Naive thymus-derived CD4-positive, alpha-beta T cell (primary cell): ENCODE measurements at regions of chr1 and their contacts with region 1.

Region 1: DNA sequence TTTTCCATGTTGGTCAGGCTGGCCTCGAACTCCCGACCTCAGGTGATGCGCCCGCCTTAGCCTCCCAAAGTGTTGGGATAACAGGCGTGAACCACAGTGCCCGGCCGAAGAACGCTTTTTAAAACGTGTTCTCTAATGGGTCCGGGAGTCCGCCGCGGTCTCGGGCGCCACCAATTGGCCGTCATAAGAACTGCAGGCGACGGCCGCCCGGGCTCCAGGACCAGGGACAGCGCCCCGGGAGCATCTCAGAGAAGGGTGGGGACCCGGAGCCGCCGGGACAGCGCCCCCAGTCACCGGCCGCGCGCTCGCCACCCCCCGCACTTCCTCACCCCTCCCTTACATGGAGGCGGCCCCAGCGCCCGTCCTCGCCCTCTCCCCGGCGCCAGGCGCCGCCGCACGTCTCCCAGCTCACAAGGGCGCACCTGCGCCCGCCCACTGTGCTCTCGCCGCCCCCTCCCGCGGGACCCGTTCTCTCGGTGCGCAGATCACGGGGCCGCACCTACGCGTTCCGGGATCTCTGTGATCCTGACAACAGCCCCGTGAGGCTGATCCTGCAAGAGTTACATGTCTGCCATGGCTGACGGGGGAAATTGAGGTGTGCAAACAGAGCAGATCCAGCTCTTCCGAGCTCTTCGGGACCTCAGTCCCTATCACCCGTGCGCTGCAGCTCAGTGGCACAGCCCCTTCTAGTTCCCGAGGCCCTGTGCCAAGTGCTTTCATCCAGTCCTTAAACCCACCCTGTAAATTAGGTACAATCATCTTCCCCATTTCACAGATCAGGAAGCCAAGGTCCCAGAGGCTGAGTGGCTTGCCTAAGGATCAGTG is 9.8 kb downstream of the RAP1GAP start:
- DNase-seq: peak; percentile 73 to 91 (median 81)
- ATAC-seq: peak; percentile 99
- H3K4me3 ChIP-seq: peak overlapping the region; percentile 40
- H3K4me3 Mint-ChIP-seq: peak overlapping the region in 7 of 10 donors; percentile 18 to 66 (median 42)
- H3K27ac ChIP-seq: no peak overlapping the region
- H3K27ac Mint-ChIP-seq: peak overlapping the region in 1 of 9 donors; percentile 56
- H3K4me1 ChIP-seq: peaks cover 6% of the 10 kb centered on the region in 2 donors
- H3K4me1 Mint-ChIP-seq: peaks cover 0 to 9% (median 7%) of the 10 kb centered on the region in 7 donors
- H3K27me3 ChIP-seq: no peaks in the 10 kb centered on the region
- H3K27me3 Mint-ChIP-seq: peaks cover 14 to 30% (median 16%) of the 10 kb centered on the region in 5 donors

Region 2: DNA sequence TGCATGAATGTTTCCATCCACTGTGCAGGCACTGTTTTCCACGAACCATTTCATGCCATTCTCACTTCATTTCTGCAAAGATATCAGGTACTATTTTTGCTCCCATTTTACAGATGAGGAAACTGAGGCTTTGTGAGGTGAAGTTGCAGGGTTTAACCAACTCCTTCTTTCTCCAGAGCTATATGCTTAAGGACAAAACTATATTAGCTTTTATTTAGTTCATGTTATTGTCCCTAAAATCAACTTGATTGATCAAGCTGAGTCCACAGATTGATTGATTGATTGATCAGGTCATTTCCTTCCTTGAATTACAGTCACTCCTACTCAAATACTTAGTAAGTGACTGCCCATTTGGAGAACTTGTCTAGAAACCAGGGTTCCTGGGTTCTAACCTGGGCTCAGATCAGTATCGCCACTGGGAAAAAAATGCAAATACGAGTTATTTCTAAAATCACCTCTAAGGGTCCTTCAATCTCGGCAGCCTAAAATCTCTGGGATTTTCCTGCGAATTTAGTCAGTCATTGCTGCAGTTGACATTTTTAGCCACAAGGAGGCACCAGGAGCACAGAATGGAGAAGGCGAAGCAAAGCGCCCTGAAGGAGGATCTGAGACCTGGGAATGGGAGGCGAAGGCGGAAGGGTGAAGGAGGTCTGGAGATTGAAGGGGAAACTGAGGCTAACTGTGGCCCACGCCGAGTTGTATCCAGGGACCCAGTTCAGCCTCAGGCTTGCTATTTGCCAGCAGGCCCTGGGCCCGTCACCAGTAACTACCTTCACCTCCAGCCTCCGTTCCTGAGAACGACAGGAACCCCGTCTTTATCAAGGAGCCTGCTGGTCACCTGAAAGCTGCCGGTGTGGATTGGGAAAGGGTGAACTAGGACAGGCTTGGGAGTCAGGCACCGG is 1137.1 kb before region 1 on chr1:
- CTCF ChIA-PET with region 1: no interaction called
- POLR2A ChIA-PET with region 1: no interaction called
- intact Hi-C with region 1: loop called in 1 of 2 experiments (anchors 2 kb)
- DNase-seq: peak; percentile 28 to 64 (median 55)
- ATAC-seq: peak; percentile 67
- H3K4me3 ChIP-seq: no peak overlapping the region
- H3K4me3 Mint-ChIP-seq: no peak overlapping the region
- H3K27ac ChIP-seq: no peak overlapping the region
- H3K27ac Mint-ChIP-seq: peak overlapping the region in 1 of 9 donors; percentile 44
- H3K4me1 ChIP-seq: no peaks in the 10 kb centered on the region
- H3K4me1 Mint-ChIP-seq: peaks cover 0 to 4% (median 0%) of the 10 kb centered on the region in 7 donors
- H3K27me3 ChIP-seq: peaks cover 0 to 3% of the 10 kb centered on the region in 2 donors
- H3K27me3 Mint-ChIP-seq: peaks cover 7 to 25% (median 22%) of the 10 kb centered on the region in 5 donors

Region 3: GRCh38 chr1:21232044-21232443 is 427.3 kb before region 1 on chr1:
- CTCF ChIA-PET with region 1: no interaction called
- POLR2A ChIA-PET with region 1: no interaction called
- intact Hi-C with region 1: loop called (anchors 2 to 10 kb)
- DNase-seq: peak in 6 of 9 donors; percentile 20 to 53 (median 42)
- ATAC-seq: peak; percentile 76
- H3K4me3 ChIP-seq: no peak overlapping the region
- H3K4me3 Mint-ChIP-seq: no peak overlapping the region
- H3K27ac ChIP-seq: no peak overlapping the region
- H3K27ac Mint-ChIP-seq: peak overlapping the region in 2 of 9 donors; percentile 8 to 29
- H3K4me1 ChIP-seq: no peaks in the 10 kb centered on the region
- H3K4me1 Mint-ChIP-seq: no peaks in the 10 kb centered on the region
- H3K27me3 ChIP-seq: no peaks in the 10 kb centered on the region
- H3K27me3 Mint-ChIP-seq: no peaks in the 10 kb centered on the region

Region 4: DNA sequence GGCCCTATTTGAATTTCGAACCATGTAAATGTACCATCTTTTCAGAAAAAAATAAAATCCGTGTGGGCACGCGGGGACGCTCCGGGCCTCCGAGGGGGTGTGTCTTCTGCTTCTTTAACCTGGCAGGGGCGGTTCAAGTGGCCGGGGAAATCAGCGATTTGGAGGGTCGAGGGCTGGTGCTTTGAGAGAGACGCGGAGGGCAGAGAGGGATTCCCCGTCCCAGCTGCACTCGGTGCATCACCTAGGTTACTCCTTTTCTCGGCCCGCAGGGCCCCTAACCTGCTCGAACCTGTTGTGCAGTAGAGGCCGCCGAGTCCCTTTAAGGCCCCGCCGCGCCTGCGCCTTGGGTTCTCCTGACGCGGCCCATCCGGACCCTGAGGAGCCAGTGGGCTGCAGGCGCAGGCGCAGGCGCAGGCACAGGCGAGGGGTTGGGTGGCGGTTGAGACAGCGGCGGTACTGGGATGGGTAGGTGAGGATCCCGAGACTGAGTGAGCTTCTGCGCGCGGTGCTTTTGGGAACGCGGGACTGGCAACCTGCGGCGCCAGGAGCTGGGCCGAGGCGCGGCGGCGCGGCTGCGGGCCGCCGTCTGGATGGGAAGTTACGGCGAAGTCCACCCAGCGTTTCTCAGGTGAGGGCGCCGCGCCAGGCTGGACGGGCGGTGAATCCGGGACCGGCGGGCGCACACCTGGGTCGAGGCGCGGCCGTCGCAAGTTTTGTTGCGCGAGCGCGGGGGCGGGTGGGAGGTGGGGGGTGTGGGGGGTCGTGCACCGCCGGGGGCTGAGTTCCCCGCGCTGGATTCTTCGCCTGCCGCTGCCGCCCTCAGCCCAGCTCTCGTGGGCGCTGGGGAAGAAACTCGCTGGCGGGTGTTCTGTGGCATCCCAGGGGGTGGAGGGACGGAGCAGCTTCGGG is 219.3 kb before region 1 on chr1 and contains the start of gene NBPF3:
- CTCF ChIA-PET with region 1: no interaction called
- POLR2A ChIA-PET with region 1: no interaction called
- intact Hi-C with region 1: loop called in 1 of 2 experiments (anchors 1 kb)
- DNase-seq: peak; percentile 71 to 86 (median 83)
- ATAC-seq: peak; percentile 99
- H3K4me3 ChIP-seq: peak within 1 kb of the TSS; percentile 80
- H3K4me3 Mint-ChIP-seq: peak within 1 kb of the TSS; percentile 89 to 98 (median 94)
- H3K27ac ChIP-seq: peak within 1 kb of the TSS; percentile 74
- H3K27ac Mint-ChIP-seq: peak within 1 kb of the TSS; percentile 73 to 96 (median 92)
- H3K4me1 ChIP-seq: no peaks in the 10 kb centered on the region
- H3K4me1 Mint-ChIP-seq: peaks cover 20 to 35% (median 24%) of the 10 kb centered on the region in 7 donors
- H3K27me3 ChIP-seq: no peaks in the 10 kb centered on the region
- H3K27me3 Mint-ChIP-seq: peaks cover 0 to 42% (median 2%) of the 10 kb centered on the region in 5 donors
- total RNA-seq, gene NBPF3: 5.6 to 18.1 (median 12.0) TPM

Region 5: DNA sequence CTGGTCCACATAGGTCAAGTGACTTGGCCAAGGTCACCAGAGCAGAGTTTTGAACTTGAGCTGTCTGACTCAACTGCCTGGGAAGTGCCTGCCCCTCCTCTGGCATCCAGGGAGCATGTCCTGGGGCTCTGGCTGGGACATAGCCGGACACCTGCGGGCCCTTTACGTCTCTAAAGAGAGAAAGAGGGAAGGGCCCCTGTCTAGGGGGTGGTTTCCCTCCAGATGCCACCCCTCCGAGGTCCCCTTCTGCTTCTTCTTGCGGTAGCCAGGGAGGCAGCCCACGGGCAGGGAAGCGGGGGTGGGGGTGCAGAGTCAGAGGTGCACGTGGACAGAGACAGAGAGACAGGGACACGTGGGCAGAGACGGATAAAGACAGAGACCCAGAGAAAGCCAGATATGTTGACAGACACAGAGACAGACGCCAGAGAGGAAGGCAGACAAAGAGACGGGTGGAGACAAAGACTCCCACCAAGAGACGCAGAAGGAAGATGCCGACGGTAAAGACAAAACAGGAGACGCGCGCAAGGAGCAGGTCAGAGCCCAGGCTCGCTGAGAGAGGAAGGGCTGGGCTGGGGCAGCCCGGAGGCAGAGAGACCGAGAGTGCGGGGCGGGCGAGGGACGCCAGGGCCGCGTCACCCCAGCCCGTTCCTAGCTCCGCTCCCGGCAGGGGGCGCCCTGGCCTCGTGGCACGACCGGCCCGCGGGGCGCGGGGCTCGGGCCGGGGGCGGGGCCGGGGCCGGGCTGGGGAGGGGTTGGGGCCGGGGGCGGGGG is 150.5 kb before region 1 on chr1:
- CTCF ChIA-PET with region 1: no interaction called
- POLR2A ChIA-PET with region 1: no interaction called
- intact Hi-C with region 1: loop called (anchors 1 kb)
- DNase-seq: peak; percentile 20 to 83 (median 48)
- ATAC-seq: peak; percentile 90
- H3K4me3 ChIP-seq: no peak overlapping the region
- H3K4me3 Mint-ChIP-seq: peak overlapping the region; percentile 68 to 95 (median 80)
- H3K27ac ChIP-seq: no peak overlapping the region
- H3K27ac Mint-ChIP-seq: peak overlapping the region in 1 of 9 donors; percentile 25
- H3K4me1 ChIP-seq: peaks cover 0 to 5% of the 10 kb centered on the region in 2 donors
- H3K4me1 Mint-ChIP-seq: peaks cover 4 to 18% (median 7%) of the 10 kb centered on the region in 7 donors
- H3K27me3 ChIP-seq: peaks cover 0 to 5% of the 10 kb centered on the region in 2 donors
- H3K27me3 Mint-ChIP-seq: peaks cover 55 to 64% (median 60%) of the 10 kb centered on the region in 5 donors

Region 6: DNA sequence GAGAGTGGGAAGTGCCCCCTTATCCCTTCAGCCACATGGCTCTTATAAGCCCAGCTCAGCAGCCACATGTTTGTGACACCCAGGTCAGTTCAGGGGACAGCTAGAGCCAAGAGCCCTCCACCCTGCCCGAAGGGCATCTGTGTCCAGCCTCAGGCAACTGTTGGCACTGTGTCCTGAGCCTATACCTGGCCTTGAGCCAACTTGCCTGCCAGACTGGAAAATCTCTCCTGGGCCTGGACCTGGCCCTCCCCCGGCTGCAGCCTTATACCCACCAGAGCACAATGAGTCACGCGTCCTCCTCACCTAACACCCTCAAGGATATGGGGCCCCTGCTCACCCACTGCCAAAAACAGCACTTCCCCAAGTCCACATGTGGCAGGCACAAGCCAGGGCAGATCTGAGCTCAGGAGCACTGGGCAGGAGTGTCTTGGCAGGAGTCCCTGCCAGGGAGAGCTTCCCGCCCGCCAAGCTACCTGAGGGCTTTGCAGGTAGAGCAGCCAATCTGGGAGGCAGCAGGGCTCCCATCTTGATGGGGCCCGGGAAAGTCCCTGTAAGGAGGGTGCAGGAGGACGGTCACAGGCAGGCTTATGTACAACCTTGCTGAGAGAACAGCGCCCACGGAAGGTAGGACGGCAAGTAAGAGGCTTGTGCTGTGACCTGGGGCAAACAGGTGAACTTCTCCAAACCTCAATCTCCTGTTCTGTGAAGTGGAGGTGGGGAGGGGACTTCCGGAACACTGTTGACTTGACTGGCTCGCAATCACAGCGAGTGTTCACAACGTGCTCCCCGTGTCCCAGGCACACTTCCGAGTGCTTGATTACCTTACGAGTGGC is 297.6 kb after region 1 on chr1:
- CTCF ChIA-PET with region 1: no interaction called
- POLR2A ChIA-PET with region 1: no interaction called
- intact Hi-C with region 1: loop called in 1 of 2 experiments (anchors 2 kb)
- DNase-seq: peak; percentile 21 to 84 (median 76)
- ATAC-seq: peak; percentile 96
- H3K4me3 ChIP-seq: peak overlapping the region; percentile 43
- H3K4me3 Mint-ChIP-seq: peak overlapping the region; percentile 65 to 86 (median 80)
- H3K27ac ChIP-seq: peak overlapping the region; percentile 62
- H3K27ac Mint-ChIP-seq: peak overlapping the region; percentile 77 to 99 (median 93)
- H3K4me1 ChIP-seq: peaks cover 8 to 31% of the 10 kb centered on the region in 2 donors
- H3K4me1 Mint-ChIP-seq: peaks cover 17 to 44% (median 29%) of the 10 kb centered on the region in 7 donors
- H3K27me3 ChIP-seq: no peaks in the 10 kb centered on the region
- H3K27me3 Mint-ChIP-seq: peaks cover 0 to 7% (median 2%) of the 10 kb centered on the region in 5 donors